Heart left ventricle (tissue), 16 donors: ENCODE measurements at regions of chr12 and their contacts with region 1.

Region 1: GRCh38 chr12:94649349-94650142 is 811 bp downstream of the TMCC3 start:
- DNase-seq: peak; percentile 50 to 82 (median 52)
- ATAC-seq: peak in 3 of 4 donors; percentile 76 to 81 (median 78)
- H3K4me3 ChIP-seq: peak overlapping the region; percentile 58 to 90 (median 73)
- H3K27ac ChIP-seq: peak overlapping the region; percentile 33 to 78 (median 68)
- H3K4me1 ChIP-seq: peaks cover 0 to 25% (median 5%) of the 10 kb centered on the region in 12 donors
- H3K27me3 ChIP-seq: peaks cover 0 to 7% (median 0%) of the 10 kb centered on the region in 9 donors
- CTCF ChIP-seq: peak; percentile 18 to 63 (median 40)
- POLR2A ChIP-seq: no peak

Region 2: GRCh38 chr12:94553130-94553519 is 96.4 kb before region 1 on chr12:
- intact Hi-C with region 1: loop called in 1 of 10 experiments (anchors 10 kb)
- DNase-seq: no peak
- ATAC-seq: no peak
- H3K4me3 ChIP-seq: no peak overlapping the region
- H3K27ac ChIP-seq: no peak overlapping the region
- H3K4me1 ChIP-seq: no peaks in the 10 kb centered on the region
- H3K27me3 ChIP-seq: no peaks in the 10 kb centered on the region
- CTCF ChIP-seq: no peak
- POLR2A ChIP-seq: no peak

Region 3: GRCh38 chr12:94586589-94587259 is 62.8 kb before region 1 on chr12:
- intact Hi-C with region 1: loop called in 5 of 10 experiments (anchors 5 to 10 kb)
- DNase-seq: no peak
- ATAC-seq: peak in 1 of 4 donors; percentile 26
- H3K4me3 ChIP-seq: no peak overlapping the region
- H3K27ac ChIP-seq: peak overlapping the region; percentile 11 to 86 (median 68)
- H3K4me1 ChIP-seq: peaks cover 0 to 33% (median 14%) of the 10 kb centered on the region in 12 donors
- H3K27me3 ChIP-seq: no peaks in the 10 kb centered on the region
- CTCF ChIP-seq: no peak
- POLR2A ChIP-seq: no peak

Region 4: DNA sequence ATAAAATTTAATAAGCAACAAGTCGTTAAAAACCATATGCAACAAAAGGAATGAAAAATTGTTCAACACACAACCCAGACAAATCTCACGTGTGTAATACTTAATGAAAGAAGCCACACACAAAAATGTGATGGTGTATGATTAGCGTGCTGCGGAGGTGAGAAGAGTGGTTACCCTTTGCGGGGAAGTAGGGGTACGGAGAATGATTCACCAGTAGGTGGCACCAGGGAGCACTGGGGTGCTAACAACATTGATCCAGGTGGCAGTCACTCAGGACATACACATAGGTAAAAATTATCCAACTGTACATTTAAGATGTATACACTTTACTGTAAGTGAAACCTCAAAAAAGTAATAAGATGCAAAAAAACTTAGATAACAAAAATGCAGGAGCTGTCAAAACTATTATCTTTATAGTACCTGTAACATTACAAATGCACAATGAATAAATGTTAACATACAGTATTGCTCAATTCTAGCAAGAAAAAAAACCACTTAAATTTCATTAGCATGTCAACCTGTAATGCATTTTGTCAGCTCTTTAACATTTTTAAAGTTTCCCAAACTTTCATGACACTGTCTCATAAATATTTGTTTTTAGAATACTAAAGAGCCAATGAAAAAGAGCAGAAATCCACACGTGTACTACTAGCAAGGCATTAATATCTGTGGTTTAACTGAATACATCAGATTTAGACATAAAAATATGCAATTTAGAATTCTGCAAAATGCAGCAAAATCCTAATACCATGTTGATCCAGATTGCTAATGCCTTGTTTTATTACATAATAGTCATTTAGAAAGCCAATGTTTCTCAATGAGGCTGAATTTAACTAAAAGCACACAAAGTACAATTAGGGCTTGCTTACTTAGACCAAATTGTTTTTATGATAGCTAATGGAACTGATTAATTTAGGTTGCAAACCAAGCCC is 45.8 kb before region 1 on chr12:
- intact Hi-C with region 1: loop called in 1 of 10 experiments (anchors 5 kb)
- DNase-seq: peak in 1 of 5 donors; percentile 36
- ATAC-seq: peak in 1 of 4 donors; percentile 44
- H3K4me3 ChIP-seq: no peak overlapping the region
- H3K27ac ChIP-seq: no peak overlapping the region
- H3K4me1 ChIP-seq: peaks cover 0 to 6% (median 0%) of the 10 kb centered on the region in 12 donors
- H3K27me3 ChIP-seq: no peaks in the 10 kb centered on the region
- CTCF ChIP-seq: peak; percentile 44 to 72 (median 62)
- POLR2A ChIP-seq: no peak

Region 5: GRCh38 chr12:94745562-94745961 is 96.0 kb after region 1 on chr12:
- intact Hi-C with region 1: no loop called
- DNase-seq: no peak
- ATAC-seq: no peak
- H3K4me3 ChIP-seq: no peak overlapping the region
- H3K27ac ChIP-seq: no peak overlapping the region
- H3K4me1 ChIP-seq: no peaks in the 10 kb centered on the region
- H3K27me3 ChIP-seq: peaks cover 0 to 4% (median 0%) of the 10 kb centered on the region in 9 donors
- CTCF ChIP-seq: no peak
- POLR2A ChIP-seq: no peak

Region 6: GRCh38 chr12:94889445-94890210 is 240.1 kb after region 1 on chr12:
- intact Hi-C with region 1: no loop called
- DNase-seq: no peak
- ATAC-seq: peak in 2 of 4 donors; percentile 51 to 69
- H3K4me3 ChIP-seq: no peak overlapping the region
- H3K27ac ChIP-seq: peak overlapping the region in 2 of 12 donors; percentile 11 to 35
- H3K4me1 ChIP-seq: no peaks in the 10 kb centered on the region
- H3K27me3 ChIP-seq: no peaks in the 10 kb centered on the region
- CTCF ChIP-seq: no peak
- POLR2A ChIP-seq: no peak

Region 7: GRCh38 chr12:94951200-94951934 is 301.8 kb after region 1 on chr12:
- intact Hi-C with region 1: no loop called
- DNase-seq: no peak
- ATAC-seq: no peak
- H3K4me3 ChIP-seq: no peak overlapping the region
- H3K27ac ChIP-seq: no peak overlapping the region
- H3K4me1 ChIP-seq: peaks cover 0 to 22% (median 0%) of the 10 kb centered on the region in 12 donors
- H3K27me3 ChIP-seq: no peaks in the 10 kb centered on the region
- CTCF ChIP-seq: no peak
- POLR2A ChIP-seq: no peak